Activated T-helper 1 cell treated with anti-CD3 and anti-CD28 coated beads, Interleukin-12 subunit alpha, Interleukin-12 subunit beta, Interleukin-2, Interleukin-4 antibody, amounts not matched to agents 30 ng/mL and 10 ng/mL and 1 ng/mL, durations not matched to agents 14 hours and 24 hours and 36 hours (primary cell): ENCODE measurements at regions of chr2 and their contacts with region 1.

Region 1: GRCh38 chr2:161077367-161078210 is 82.6 kb upstream of the TANK start:
- DNase-seq: peak; percentile 82
- H3K4me3 Mint-ChIP-seq: peak overlapping the region; percentile 54
- H3K27ac Mint-ChIP-seq: peak overlapping the region; percentile 95
- H3K4me1 Mint-ChIP-seq: peaks cover 77% of the 10 kb centered on the region
- H3K27me3 Mint-ChIP-seq: peaks cover 1% of the 10 kb centered on the region

Region 2: DNA sequence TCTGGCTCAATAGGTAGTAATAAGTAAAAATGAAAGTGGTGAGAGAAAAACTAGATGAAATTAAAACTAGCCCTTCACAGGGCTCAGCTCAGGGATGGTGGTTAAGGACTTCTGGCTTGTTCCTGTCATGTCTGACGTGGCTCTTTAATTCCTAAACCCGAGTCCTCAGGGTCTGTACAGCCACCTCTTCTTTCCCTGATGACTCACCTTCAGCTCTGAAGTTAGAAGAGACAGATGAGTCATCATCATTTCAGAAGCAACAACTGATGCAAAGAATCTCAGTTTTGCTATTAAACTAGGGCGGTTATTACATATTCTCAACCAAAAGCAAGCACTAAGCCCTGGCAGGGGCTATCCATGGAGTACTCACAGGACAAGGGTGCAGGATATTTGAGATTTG is 853.5 kb before region 1 on chr2:
- intact Hi-C with region 1: loop called (anchors 1 kb)
- DNase-seq: peak; percentile 23
- H3K4me3 Mint-ChIP-seq: peak overlapping the region; percentile 39
- H3K27ac Mint-ChIP-seq: peak overlapping the region; percentile 32
- H3K4me1 Mint-ChIP-seq: peaks cover 56% of the 10 kb centered on the region
- H3K27me3 Mint-ChIP-seq: peaks cover 5% of the 10 kb centered on the region

Region 3: DNA sequence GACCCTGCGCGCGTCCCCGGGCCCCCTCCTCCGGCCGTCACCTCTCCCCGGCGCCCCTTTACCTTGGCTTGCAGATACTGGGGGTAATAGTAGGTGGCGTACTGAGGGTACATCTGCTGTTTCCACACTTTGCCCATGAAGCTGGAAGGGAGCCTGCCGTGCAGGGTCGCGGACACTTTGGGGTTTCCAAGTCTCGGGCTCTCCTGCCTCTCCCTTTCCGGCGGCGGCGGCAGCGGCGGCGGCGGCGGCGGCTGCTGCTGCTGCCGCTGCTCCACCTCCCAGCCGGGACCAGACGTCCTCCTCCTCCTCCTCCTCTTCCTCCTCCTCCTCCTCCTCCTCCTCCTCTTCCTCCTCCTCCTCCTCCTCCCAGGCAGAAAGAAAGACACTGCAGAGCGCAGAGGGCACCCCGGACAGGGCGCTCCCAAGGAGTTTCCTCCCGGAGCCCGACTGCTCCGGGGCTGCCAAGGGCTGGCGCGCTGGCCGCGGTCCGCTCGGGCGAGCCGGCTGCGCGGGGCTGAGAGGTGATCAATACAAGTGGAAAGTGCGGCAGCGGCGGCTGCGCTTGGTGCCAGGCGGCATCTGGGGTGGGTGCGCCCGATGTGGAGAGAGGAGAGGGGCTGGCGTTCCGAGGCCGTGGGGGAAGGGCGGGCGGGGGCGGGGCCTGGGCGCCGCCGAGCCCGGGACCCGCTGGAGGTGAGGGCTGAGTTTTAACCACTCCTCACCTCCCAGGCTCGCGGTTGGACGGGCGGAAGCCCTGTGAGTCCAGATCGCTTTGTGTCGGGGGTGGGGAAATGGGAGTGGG is 584.2 kb before region 1 on chr2 and contains the start of gene RBMS1:
- intact Hi-C with region 1: loop called (anchors 5 kb)
- DNase-seq: peak; percentile 35
- H3K4me3 Mint-ChIP-seq: peak within 1 kb of the TSS; percentile 97
- H3K27ac Mint-ChIP-seq: peak within 1 kb of the TSS; percentile 97
- H3K4me1 Mint-ChIP-seq: peaks cover 47% of the 10 kb centered on the region
- H3K27me3 Mint-ChIP-seq: peaks cover 9% of the 10 kb centered on the region
- total RNA-seq, gene RBMS1: 35.4 and 36.3 TPM in 2 replicates

Region 4: GRCh38 chr2:161017780-161018470 is 59.7 kb before region 1 on chr2:
- intact Hi-C with region 1: no loop called
- DNase-seq: no peak
- H3K4me3 Mint-ChIP-seq: no peak overlapping the region
- H3K27ac Mint-ChIP-seq: no peak overlapping the region
- H3K4me1 Mint-ChIP-seq: no peaks in the 10 kb centered on the region
- H3K27me3 Mint-ChIP-seq: peaks cover 4% of the 10 kb centered on the region

Region 5: GRCh38 chr2:161112908-161113307 is 35.3 kb after region 1 on chr2:
- intact Hi-C with region 1: no loop called
- DNase-seq: no peak
- H3K4me3 Mint-ChIP-seq: no peak overlapping the region
- H3K27ac Mint-ChIP-seq: no peak overlapping the region
- H3K4me1 Mint-ChIP-seq: no peaks in the 10 kb centered on the region
- H3K27me3 Mint-ChIP-seq: peaks cover 8% of the 10 kb centered on the region

Region 6: DNA sequence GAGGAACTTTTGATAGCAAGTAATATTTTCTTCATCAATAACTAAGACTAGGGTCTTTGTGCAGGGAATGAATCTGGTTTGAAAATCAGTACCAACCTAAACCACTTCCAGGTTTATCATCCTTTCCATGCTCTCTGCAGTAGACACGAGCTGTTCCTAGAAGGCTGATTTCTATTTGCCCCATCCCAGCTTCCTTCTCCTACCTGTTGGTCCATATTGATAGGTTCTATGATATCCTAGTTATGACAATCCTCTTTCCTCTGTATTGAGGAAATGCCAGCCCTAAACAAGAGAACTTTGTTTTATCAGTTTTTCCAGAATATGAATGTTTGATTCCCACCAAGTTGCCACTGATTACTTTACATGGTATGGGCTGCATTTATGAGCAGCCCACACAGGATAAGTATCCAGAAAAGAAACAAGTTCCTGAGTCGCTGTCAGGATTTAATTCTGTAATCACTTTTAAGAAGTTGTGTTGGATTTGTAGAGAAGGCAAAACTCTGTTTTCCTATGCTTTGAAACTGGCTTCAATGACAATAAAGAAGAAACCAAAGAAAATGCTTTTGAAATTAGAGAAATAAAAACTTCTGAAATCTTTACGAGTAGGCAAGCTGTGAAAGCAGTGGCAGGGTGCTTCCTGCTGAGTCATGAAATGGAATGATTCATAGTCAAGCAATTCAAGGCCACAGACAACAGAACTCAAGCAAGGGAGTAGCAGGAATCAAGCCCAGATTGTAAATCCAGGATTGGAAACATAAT is 45.4 kb after region 1 on chr2:
- intact Hi-C with region 1: loop called (anchors 1 kb)
- DNase-seq: no peak
- H3K4me3 Mint-ChIP-seq: peak overlapping the region; percentile 15
- H3K27ac Mint-ChIP-seq: peak overlapping the region; percentile 32
- H3K4me1 Mint-ChIP-seq: peaks cover 34% of the 10 kb centered on the region
- H3K27me3 Mint-ChIP-seq: no peaks in the 10 kb centered on the region

Region 7: DNA sequence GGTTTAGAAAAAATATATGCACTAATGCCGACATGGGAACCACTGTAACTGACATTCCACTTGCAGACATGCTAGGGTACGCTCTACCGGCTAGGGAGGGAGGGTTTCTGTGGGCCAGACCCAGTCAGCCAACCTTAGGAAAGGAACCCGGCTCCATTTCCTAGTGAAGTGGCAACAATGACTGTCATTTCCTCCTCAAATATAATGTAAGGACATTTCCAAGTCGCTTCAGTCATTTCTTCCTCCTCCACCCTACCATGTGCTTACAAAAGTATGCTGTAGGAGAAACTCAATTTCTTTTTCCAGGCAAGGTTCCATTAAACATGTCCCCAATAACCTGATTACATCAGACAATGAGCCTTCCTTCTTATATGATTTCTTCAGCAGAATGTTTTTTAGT is 166.3 kb after region 1 on chr2:
- intact Hi-C with region 1: loop called (anchors 2 kb)
- DNase-seq: no peak
- H3K4me3 Mint-ChIP-seq: peak overlapping the region; percentile 87
- H3K27ac Mint-ChIP-seq: peak overlapping the region; percentile 96
- H3K4me1 Mint-ChIP-seq: peaks cover 65% of the 10 kb centered on the region
- H3K27me3 Mint-ChIP-seq: no peaks in the 10 kb centered on the region

Region 8: DNA sequence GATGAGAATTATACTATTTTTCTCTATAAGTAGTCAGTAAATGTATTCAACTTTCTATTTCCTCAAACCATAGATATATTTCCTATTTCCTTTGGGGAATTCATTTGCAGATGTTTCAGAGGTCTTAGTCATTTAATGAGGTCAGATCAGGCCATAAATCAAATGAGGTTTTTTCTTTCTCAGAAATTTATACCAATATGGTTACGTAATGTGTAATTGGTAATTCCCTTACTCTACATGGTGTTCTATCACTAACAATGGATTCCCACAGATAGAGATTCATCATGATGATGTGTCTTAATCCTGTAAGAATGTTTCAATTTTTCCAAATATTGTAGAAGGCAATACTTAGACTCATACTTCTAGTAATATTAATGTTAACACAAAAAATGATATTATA is 888.4 kb after region 1 on chr2:
- intact Hi-C with region 1: loop called (anchors 2 kb)
- DNase-seq: no peak
- H3K4me3 Mint-ChIP-seq: no peak overlapping the region
- H3K27ac Mint-ChIP-seq: peak overlapping the region; percentile 1
- H3K4me1 Mint-ChIP-seq: peaks cover 86% of the 10 kb centered on the region
- H3K27me3 Mint-ChIP-seq: no peaks in the 10 kb centered on the region